ENCODE measurements at regions of chr10 and their contacts with region 1.

Region 1: DNA sequence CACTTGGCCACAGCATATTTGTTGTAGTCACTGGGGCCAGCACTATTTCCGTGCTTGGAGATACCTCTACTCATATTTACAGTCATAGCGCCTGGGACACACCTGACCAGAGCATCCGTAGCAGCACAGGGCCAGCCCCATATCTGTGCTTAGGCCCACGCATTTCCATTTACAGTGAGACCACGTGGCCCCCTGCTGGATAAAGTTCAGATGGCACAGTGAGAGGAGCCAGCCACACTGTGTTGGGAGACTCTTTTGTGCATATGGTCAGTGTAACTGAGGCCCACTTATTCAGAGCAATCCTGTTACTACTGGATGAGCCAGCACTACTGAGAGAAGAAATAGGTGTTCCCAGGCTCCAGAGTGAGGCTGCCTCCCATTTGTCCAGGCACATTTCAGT is 455.3 kb downstream of the REEP3 start:
- DNase-seq: peak; percentile 69
- H3K4me3 Mint-ChIP-seq: no peak overlapping the region
- H3K27ac Mint-ChIP-seq: no peak overlapping the region
- H3K4me1 Mint-ChIP-seq: no peaks in the 10 kb centered on the region
- H3K27me3 Mint-ChIP-seq: no peaks in the 10 kb centered on the region
- CTCF ChIP-seq: peak; percentile 65

Region 2: GRCh38 chr10:63866075-63866746 is 110.3 kb before region 1 on chr10:
- CTCF ChIA-PET with region 1: interaction called, 48 read pairs
- POLR2A ChIA-PET with region 1: interaction called, 3 read pairs
- intact Hi-C with region 1: no loop called
- DNase-seq: peak; percentile 64
- H3K4me3 Mint-ChIP-seq: peak overlapping the region; percentile 20
- H3K27ac Mint-ChIP-seq: no peak overlapping the region
- H3K4me1 Mint-ChIP-seq: peaks cover 12% of the 10 kb centered on the region
- H3K27me3 Mint-ChIP-seq: peaks cover 44% of the 10 kb centered on the region
- CTCF ChIP-seq: peak; percentile 57

Region 3: GRCh38 chr10:63965846-63966245 is 10.7 kb before region 1 on chr10:
- CTCF ChIA-PET with region 1: interaction called, 24 read pairs
- POLR2A ChIA-PET with region 1: interaction called, 5 read pairs
- intact Hi-C with region 1: no loop called
- DNase-seq: no peak
- H3K4me3 Mint-ChIP-seq: no peak overlapping the region
- H3K27ac Mint-ChIP-seq: no peak overlapping the region
- H3K4me1 Mint-ChIP-seq: no peaks in the 10 kb centered on the region
- H3K27me3 Mint-ChIP-seq: no peaks in the 10 kb centered on the region
- CTCF ChIP-seq: no peak

Region 4: GRCh38 chr10:63997323-63997722 is 20.8 kb after region 1 on chr10:
- CTCF ChIA-PET with region 1: interaction called, 12 read pairs
- POLR2A ChIA-PET with region 1: no interaction called
- intact Hi-C with region 1: no loop called
- DNase-seq: no peak
- H3K4me3 Mint-ChIP-seq: no peak overlapping the region
- H3K27ac Mint-ChIP-seq: no peak overlapping the region
- H3K4me1 Mint-ChIP-seq: no peaks in the 10 kb centered on the region
- H3K27me3 Mint-ChIP-seq: no peaks in the 10 kb centered on the region
- CTCF ChIP-seq: no peak

Region 5: DNA sequence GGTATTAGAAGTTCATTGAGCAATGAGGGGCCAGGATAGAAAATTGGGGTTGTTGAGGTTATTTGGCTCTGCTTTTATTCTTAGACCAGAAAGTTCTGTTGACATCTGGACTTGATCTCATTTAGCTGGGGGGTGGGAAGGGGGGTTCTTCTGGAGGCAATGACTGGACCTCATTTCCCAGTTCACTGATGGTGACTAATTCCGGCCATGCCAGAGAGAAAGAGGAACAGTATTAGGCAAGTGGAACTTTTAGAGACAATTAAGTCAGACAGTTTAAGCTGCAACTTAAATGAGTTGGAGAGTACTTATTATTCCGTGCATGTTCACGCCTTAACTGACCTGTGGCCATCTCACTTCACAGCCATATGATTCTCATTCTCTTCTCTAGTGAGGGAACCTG is 57.2 kb after region 1 on chr10:
- CTCF ChIA-PET with region 1: interaction called, 13 read pairs
- POLR2A ChIA-PET with region 1: no interaction called
- intact Hi-C with region 1: no loop called
- DNase-seq: no peak
- H3K4me3 Mint-ChIP-seq: no peak overlapping the region
- H3K27ac Mint-ChIP-seq: no peak overlapping the region
- H3K4me1 Mint-ChIP-seq: peaks cover 19% of the 10 kb centered on the region
- H3K27me3 Mint-ChIP-seq: no peaks in the 10 kb centered on the region
- CTCF ChIP-seq: no peak

Region 6: DNA sequence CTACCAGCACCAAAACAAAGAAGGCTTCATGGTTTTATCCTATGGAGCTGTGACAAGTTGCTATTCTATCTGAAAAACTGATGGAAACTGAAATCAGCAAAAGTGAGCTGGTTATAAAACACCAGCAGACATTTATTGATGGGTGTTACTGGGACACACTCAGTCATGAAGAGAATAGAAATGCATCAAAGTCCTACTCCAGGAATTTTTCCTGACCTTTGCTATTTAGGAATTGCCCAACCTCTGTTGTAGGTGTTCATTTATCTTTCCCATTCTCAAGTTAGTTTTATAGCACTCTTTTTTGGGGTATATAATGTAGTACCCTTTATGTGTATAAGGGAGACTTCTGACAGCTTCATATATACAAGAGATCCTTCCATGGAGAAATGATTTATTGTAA is 77.9 kb after region 1 on chr10:
- CTCF ChIA-PET with region 1: no interaction called
- POLR2A ChIA-PET with region 1: no interaction called
- intact Hi-C with region 1: no loop called
- DNase-seq: no peak
- H3K4me3 Mint-ChIP-seq: no peak overlapping the region
- H3K27ac Mint-ChIP-seq: no peak overlapping the region
- H3K4me1 Mint-ChIP-seq: no peaks in the 10 kb centered on the region
- H3K27me3 Mint-ChIP-seq: no peaks in the 10 kb centered on the region
- CTCF ChIP-seq: no peak